Prostate gland (tissue), 2 donors: ENCODE measurements at regions of chr15 and their contacts with region 1.

Region 1: GRCh38 chr15:91263996-91264531 is 164.0 kb downstream of the SV2B start:
- DNase-seq: peak; percentile 68
- H3K4me3 ChIP-seq: peak overlapping the region in 1 of 2 donors; percentile 5
- H3K27ac ChIP-seq: peak overlapping the region; percentile 27 to 80
- H3K4me1 ChIP-seq: peaks cover 14% of the 10 kb centered on the region
- H3K27me3 ChIP-seq: no peaks in the 10 kb centered on the region
- CTCF ChIP-seq: no peak
- POLR2A ChIP-seq: no peak

Region 2: GRCh38 chr15:91055548-91056331 is 208.3 kb before region 1 on chr15:
- intact Hi-C with region 1: loop called (anchors 2 kb)
- DNase-seq: peak; percentile 72
- H3K4me3 ChIP-seq: no peak overlapping the region
- H3K27ac ChIP-seq: no peak overlapping the region
- H3K4me1 ChIP-seq: no peaks in the 10 kb centered on the region
- H3K27me3 ChIP-seq: no peaks in the 10 kb centered on the region
- CTCF ChIP-seq: peak in 3 of 4 experiments; percentile 66 to 83 (median 82)
- POLR2A ChIP-seq: no peak

Region 3: GRCh38 chr15:91113030-91113429 is 151.0 kb before region 1 on chr15:
- intact Hi-C with region 1: no loop called
- DNase-seq: no peak
- H3K4me3 ChIP-seq: no peak overlapping the region
- H3K27ac ChIP-seq: no peak overlapping the region
- H3K4me1 ChIP-seq: peaks cover 3% of the 10 kb centered on the region
- H3K27me3 ChIP-seq: no peaks in the 10 kb centered on the region
- CTCF ChIP-seq: no peak
- POLR2A ChIP-seq: no peak